ENCODE measurements at regions of chr4 and their contacts with region 1.

Region 1: DNA sequence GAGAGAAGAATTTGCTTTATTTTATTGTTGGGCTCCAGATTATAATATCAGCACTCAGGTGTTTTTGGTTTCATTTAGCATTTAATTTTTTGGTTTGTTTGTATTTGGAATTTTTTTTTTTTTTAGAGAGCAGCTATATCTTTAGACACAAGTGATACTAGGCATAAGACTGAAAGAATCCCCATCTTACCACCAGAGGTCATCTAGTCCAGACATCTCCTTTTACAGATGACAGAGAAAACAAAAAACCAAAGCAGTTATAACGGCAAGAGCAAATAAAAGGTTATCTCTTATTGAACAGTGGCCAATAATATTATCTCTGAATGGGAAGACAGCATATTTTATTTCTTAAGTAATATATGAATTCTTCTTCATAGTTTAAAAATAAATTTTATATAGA is 22.8 kb downstream of the USP38 start:
- DNase-seq: no peak
- H3K4me3 ChIP-seq: no peak overlapping the region
- H3K27ac ChIP-seq: no peak overlapping the region
- H3K4me1 ChIP-seq: no peaks in the 10 kb centered on the region
- H3K27me3 ChIP-seq: no peaks in the 10 kb centered on the region
- CTCF ChIP-seq: peak in 1 of 3 donors; percentile 19
- EP300 ChIP-seq: no peak
- POLR2A ChIP-seq: no peak

Region 2: GRCh38 chr4:143335979-143336780 is 128.6 kb after region 1 on chr4:
- intact Hi-C with region 1: loop called in 1 of 4 experiments (anchors 10 kb)
- DNase-seq: peak; percentile 89 to 91 (median 89)
- H3K4me3 ChIP-seq: peak overlapping the region; percentile 86
- H3K27ac ChIP-seq: peak overlapping the region; percentile 95 to 98
- H3K4me1 ChIP-seq: peaks cover 1% of the 10 kb centered on the region
- H3K27me3 ChIP-seq: no peaks in the 10 kb centered on the region
- CTCF ChIP-seq: no peak
- EP300 ChIP-seq: no peak
- POLR2A ChIP-seq: peak; percentile 49

Region 3: GRCh38 chr4:143482840-143483239 is 275.3 kb after region 1 on chr4:
- intact Hi-C with region 1: loop called in 3 of 4 experiments (anchors 5 to 10 kb)
- DNase-seq: peak in 2 of 5 donors; percentile 24 to 34
- H3K4me3 ChIP-seq: no peak overlapping the region
- H3K27ac ChIP-seq: no peak overlapping the region
- H3K4me1 ChIP-seq: no peaks in the 10 kb centered on the region
- H3K27me3 ChIP-seq: no peaks in the 10 kb centered on the region
- CTCF ChIP-seq: peak; percentile 59 to 78 (median 78)
- EP300 ChIP-seq: no peak
- POLR2A ChIP-seq: no peak

Region 4: GRCh38 chr4:143489106-143489505 is 281.5 kb after region 1 on chr4:
- intact Hi-C with region 1: loop called in 3 of 4 experiments (anchors 5 to 10 kb)
- DNase-seq: no peak
- H3K4me3 ChIP-seq: no peak overlapping the region
- H3K27ac ChIP-seq: no peak overlapping the region
- H3K4me1 ChIP-seq: no peaks in the 10 kb centered on the region
- H3K27me3 ChIP-seq: no peaks in the 10 kb centered on the region
- CTCF ChIP-seq: no peak
- EP300 ChIP-seq: no peak
- POLR2A ChIP-seq: no peak

Measured in ovary (tissue), 10 donors.